CD8-positive, alpha-beta T cell (primary cell): ENCODE measurements at regions of chr3 and their contacts with region 1.

Region 1: DNA sequence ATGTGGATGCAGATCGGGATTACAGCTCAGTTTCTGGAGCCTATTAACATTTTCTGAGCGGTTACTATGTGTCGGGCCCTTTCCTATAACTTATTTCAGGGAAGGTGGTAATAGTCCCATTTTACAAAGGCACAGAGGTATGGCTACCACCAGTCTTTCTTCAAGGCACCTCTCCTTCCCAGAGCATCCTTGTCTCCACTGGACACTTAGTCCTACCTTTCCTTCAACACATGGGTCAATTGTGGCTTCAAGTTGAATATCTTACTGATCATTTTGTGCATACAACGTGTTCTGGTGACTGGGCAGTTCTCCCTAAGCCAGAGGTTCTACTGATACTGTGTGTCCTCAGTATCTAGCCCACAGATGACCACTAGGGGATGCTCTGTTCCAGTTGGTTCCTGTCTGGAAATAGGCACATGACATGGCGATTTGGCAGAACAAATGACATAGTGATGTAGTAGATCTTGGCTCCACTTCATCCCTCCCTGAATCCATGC is 60.7 kb upstream of the CMTM8 start:
- DNase-seq: peak in 8 of 9 experiments; percentile 19 to 58 (median 34)
- ATAC-seq: peak; percentile 59
- H3K4me3 ChIP-seq: no peak overlapping the region
- H3K4me3 Mint-ChIP-seq: peak overlapping the region; percentile 5
- H3K27ac ChIP-seq: no peak overlapping the region
- H3K27ac Mint-ChIP-seq: no peak overlapping the region
- H3K4me1 ChIP-seq: peaks cover 8% of the 10 kb centered on the region
- H3K4me1 Mint-ChIP-seq: peaks cover 10% of the 10 kb centered on the region
- H3K27me3 ChIP-seq: no peaks in the 10 kb centered on the region
- H3K27me3 Mint-ChIP-seq: peaks cover 4% of the 10 kb centered on the region
- CTCF ChIP-seq: no peak

Region 2: DNA sequence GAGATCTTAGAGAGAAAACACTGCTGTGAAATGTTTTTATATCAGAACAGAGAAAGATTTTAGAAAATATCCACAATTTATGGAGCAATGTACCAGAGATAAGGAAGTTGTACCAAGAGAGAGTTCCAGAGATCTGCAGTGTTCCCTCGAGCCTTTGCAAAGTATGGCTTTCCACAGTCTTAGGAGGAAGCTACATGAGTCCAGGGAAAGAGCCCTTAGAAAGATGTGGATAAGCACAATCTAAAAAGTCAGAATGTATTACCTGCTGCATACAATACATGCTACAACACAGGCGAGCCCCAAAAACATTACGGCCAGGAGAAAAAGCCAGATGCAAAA is 139.9 kb before region 1 on chr3:
- CTCF ChIA-PET with region 1: no interaction called
- POLR2A ChIA-PET with region 1: no interaction called
- intact Hi-C with region 1: no loop called
- DNase-seq: no peak
- ATAC-seq: no peak
- H3K4me3 ChIP-seq: no peak overlapping the region
- H3K4me3 Mint-ChIP-seq: no peak overlapping the region
- H3K27ac ChIP-seq: no peak overlapping the region
- H3K27ac Mint-ChIP-seq: no peak overlapping the region
- H3K4me1 ChIP-seq: no peaks in the 10 kb centered on the region
- H3K4me1 Mint-ChIP-seq: no peaks in the 10 kb centered on the region
- H3K27me3 ChIP-seq: no peaks in the 10 kb centered on the region
- H3K27me3 Mint-ChIP-seq: peaks cover 3% of the 10 kb centered on the region
- CTCF ChIP-seq: no peak

Region 3: DNA sequence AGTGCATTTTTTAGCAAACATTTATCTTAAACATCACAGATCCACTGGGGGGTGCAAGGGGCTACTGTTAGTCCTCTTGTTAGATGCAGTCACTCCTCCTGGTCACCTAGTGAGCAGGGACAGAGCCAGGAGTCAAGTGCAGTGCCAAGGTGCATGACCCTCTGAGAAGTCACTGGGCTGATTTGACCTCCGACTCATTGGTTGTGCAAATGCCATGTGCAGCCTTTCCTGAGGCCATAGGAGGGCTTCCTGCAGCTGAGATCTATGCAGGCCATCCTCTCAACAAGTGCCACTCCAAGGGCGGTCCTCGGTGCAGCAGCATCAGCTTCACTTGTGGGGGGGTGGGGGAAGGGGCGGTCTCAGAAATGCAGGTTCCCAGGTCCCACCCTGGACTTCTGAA is 11.1 kb before region 1 on chr3:
- CTCF ChIA-PET with region 1: interaction called, 11 read pairs
- POLR2A ChIA-PET with region 1: interaction called, 3 read pairs
- intact Hi-C with region 1: no loop called
- DNase-seq: peak in 1 of 9 experiments; percentile 27
- ATAC-seq: no peak
- H3K4me3 ChIP-seq: no peak overlapping the region
- H3K4me3 Mint-ChIP-seq: no peak overlapping the region
- H3K27ac ChIP-seq: no peak overlapping the region
- H3K27ac Mint-ChIP-seq: no peak overlapping the region
- H3K4me1 ChIP-seq: no peaks in the 10 kb centered on the region
- H3K4me1 Mint-ChIP-seq: no peaks in the 10 kb centered on the region
- H3K27me3 ChIP-seq: no peaks in the 10 kb centered on the region
- H3K27me3 Mint-ChIP-seq: no peaks in the 10 kb centered on the region
- CTCF ChIP-seq: no peak

Region 4: GRCh38 chr3:32285891-32286290 is 108.1 kb after region 1 on chr3:
- CTCF ChIA-PET with region 1: interaction called, 8 read pairs
- POLR2A ChIA-PET with region 1: no interaction called
- intact Hi-C with region 1: loop called in 1 of 2 experiments (anchors 2 kb)
- DNase-seq: peak in 2 of 9 experiments; percentile 6 to 15
- ATAC-seq: no peak
- H3K4me3 ChIP-seq: no peak overlapping the region
- H3K4me3 Mint-ChIP-seq: no peak overlapping the region
- H3K27ac ChIP-seq: no peak overlapping the region
- H3K27ac Mint-ChIP-seq: no peak overlapping the region
- H3K4me1 ChIP-seq: peaks cover 25% of the 10 kb centered on the region
- H3K4me1 Mint-ChIP-seq: peaks cover 7% of the 10 kb centered on the region
- H3K27me3 ChIP-seq: no peaks in the 10 kb centered on the region
- H3K27me3 Mint-ChIP-seq: no peaks in the 10 kb centered on the region
- CTCF ChIP-seq: no peak

Region 5: DNA sequence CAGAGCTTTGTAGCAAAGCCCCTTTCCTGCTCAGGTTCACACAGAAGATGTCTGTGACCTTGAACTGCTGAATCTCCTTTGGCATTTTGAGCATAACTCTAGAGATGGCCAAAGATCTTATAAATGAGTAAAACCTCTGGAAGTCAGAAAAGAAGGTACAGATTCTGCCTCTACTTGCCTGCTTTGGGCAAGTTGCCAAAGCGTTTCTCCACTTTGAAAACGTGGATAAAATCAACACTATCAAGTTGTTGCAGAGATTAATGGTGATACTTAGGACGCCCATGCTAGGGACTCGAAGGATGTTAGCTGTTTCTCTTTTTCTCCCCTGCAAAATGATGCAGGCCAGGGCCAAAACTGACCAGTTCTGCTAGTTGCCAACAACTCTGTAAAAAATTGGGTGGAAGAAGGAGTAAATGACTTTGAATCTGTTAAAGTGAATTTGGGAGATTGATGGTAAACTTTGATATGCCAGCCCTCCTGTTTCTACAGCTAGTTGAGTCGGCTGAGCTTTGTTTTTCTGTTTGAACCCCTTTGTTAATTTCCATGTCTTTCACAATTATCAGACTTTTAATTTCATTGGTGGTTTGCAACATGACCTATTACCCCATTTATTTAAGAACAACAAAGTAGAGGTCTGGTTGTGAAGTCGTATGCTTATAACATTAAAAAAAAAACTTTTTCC is 146.0 kb after region 1 on chr3:
- CTCF ChIA-PET with region 1: interaction called, 12 read pairs
- POLR2A ChIA-PET with region 1: no interaction called
- intact Hi-C with region 1: no loop called
- DNase-seq: no peak
- ATAC-seq: no peak
- H3K4me3 ChIP-seq: no peak overlapping the region
- H3K4me3 Mint-ChIP-seq: no peak overlapping the region
- H3K27ac ChIP-seq: no peak overlapping the region
- H3K27ac Mint-ChIP-seq: no peak overlapping the region
- H3K4me1 ChIP-seq: no peaks in the 10 kb centered on the region
- H3K4me1 Mint-ChIP-seq: peaks cover 2% of the 10 kb centered on the region
- H3K27me3 ChIP-seq: no peaks in the 10 kb centered on the region
- H3K27me3 Mint-ChIP-seq: peaks cover 2% of the 10 kb centered on the region
- CTCF ChIP-seq: no peak

Region 6: GRCh38 chr3:32340039-32340438 is 162.3 kb after region 1 on chr3:
- CTCF ChIA-PET with region 1: interaction called, 30 read pairs
- POLR2A ChIA-PET with region 1: no interaction called
- intact Hi-C with region 1: loop called (anchors 1 kb)
- DNase-seq: peak in 6 of 9 experiments; percentile 21 to 64 (median 40)
- ATAC-seq: peak; percentile 78
- H3K4me3 ChIP-seq: no peak overlapping the region
- H3K4me3 Mint-ChIP-seq: no peak overlapping the region
- H3K27ac ChIP-seq: no peak overlapping the region
- H3K27ac Mint-ChIP-seq: no peak overlapping the region
- H3K4me1 ChIP-seq: peaks cover 13% of the 10 kb centered on the region
- H3K4me1 Mint-ChIP-seq: peaks cover 17% of the 10 kb centered on the region
- H3K27me3 ChIP-seq: no peaks in the 10 kb centered on the region
- H3K27me3 Mint-ChIP-seq: no peaks in the 10 kb centered on the region
- CTCF ChIP-seq: peak; percentile 66

Region 7: DNA sequence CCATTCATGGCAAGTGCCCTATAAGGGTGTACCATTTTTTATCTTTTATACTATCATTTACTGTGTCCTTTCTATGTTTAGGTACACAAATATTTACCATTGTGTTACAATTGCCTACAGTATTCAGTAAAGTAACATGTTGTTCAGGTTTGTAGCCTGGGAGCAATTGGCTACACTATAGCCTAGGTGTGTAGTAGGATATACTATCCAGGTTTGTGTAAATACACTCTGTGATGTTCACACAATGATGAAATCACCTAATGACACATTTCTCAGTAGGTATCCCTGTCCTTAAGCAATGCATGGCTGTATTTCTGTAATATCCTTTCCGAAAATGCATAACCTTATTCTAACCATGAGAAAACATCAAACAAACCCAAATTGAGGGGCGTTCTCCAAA is 489.4 kb after region 1 on chr3:
- CTCF ChIA-PET with region 1: interaction called, 5 read pairs
- POLR2A ChIA-PET with region 1: no interaction called
- intact Hi-C with region 1: loop called (anchors 2 to 5 kb)
- DNase-seq: no peak
- ATAC-seq: no peak
- H3K4me3 ChIP-seq: no peak overlapping the region
- H3K4me3 Mint-ChIP-seq: no peak overlapping the region
- H3K27ac ChIP-seq: no peak overlapping the region
- H3K27ac Mint-ChIP-seq: no peak overlapping the region
- H3K4me1 ChIP-seq: no peaks in the 10 kb centered on the region
- H3K4me1 Mint-ChIP-seq: no peaks in the 10 kb centered on the region
- H3K27me3 ChIP-seq: peaks cover 0 to 2% of the 10 kb centered on the region in 2 experiments
- H3K27me3 Mint-ChIP-seq: peaks cover 6% of the 10 kb centered on the region
- CTCF ChIP-seq: no peak